ENCODE measurements at regions of chr11 and their contacts with region 1.

Region 1: DNA sequence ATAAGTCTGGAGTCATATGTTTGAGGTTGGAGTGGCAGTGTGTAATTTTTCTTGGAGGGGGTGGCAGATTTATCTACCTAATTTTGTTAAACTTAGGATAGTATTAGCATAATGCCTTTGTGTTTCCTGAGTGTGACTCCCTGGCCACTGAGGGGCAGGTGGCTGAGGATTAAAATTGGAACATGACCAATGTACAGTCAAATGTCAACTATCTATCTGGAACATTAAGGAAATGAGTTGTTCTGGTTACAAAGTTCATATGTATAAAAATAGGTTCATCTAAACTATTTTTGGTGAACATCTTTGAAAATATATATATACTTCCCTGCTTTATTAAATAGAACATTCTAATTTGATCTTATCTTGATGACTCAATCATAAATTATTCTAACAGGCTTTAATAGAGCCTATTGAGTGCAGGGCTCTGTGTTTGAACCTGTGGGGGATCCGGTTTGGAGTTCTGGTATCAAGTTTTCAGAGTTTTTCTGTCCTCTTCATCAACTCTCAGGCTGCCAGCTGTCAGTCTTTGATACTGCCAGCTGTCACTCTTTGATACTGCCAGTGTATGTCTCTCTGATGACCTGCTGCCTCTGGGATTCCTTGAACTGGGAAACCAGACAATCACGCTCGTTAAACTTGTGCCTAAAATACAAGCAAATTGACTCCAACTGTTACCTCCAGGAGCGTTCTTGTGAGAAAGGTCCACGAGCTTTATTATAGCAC is 309.6 kb downstream of the METTL15 start:
- DNase-seq: no peak
- H3K4me3 ChIP-seq: no peak overlapping the region
- H3K27ac ChIP-seq: no peak overlapping the region
- H3K4me1 ChIP-seq: no peaks in the 10 kb centered on the region
- H3K27me3 ChIP-seq: no peaks in the 10 kb centered on the region
- CTCF ChIP-seq: no peak
- POLR2A ChIP-seq: no peak

Region 2: DNA sequence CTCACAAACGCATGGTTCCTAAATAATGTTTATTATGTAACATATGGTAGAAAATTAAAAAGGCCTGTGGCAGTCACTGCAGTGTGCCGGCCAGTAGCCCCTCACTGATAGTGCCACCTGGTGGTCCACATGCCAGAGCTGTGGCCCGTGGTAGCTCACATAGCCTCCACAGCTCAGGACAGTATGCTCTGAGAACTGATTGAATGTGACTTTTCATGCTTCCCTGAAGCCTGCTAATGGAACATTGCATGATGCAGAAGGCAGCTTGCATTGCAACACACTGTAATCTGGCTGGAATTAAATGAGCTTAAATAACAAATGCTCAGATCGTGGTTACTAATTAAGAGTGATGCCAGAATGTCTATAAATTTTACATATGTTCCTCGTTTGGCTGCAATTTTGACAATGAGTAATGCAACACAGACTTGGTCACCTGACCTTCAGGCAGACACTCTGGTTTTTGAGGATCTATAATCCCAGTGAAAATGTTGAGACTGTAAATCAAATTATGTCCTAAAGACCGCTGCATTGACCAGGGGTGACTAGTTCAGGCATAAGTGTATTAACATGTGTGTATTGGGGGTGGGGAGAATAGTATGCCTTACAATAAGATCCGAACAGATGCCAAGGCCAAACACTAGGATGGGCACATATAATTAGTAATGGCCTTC is 256.8 kb after region 1 on chr11:
- intact Hi-C with region 1: loop called (anchors 5 kb)
- DNase-seq: no peak
- H3K4me3 ChIP-seq: no peak overlapping the region
- H3K27ac ChIP-seq: no peak overlapping the region
- H3K4me1 ChIP-seq: no peaks in the 10 kb centered on the region
- H3K27me3 ChIP-seq: no peaks in the 10 kb centered on the region
- CTCF ChIP-seq: no peak
- POLR2A ChIP-seq: no peak

Measured in breast epithelium (tissue), 4 donors.